T-cell (primary cell): ENCODE measurements at regions of chr19 and their contacts with region 1.

Region 1: GRCh38 chr19:13195678-13196077 is 45.5 kb downstream of the IER2 start:
- DNase-seq: peak in 32 of 35 experiments; percentile 8 to 75 (median 41)
- ATAC-seq: peak; percentile 50 to 71 (median 60)
- H3K4me3 ChIP-seq: no peak overlapping the region
- H3K4me3 Mint-ChIP-seq: peak overlapping the region in 1 of 3 donors; percentile 22
- H3K27ac ChIP-seq: no peak overlapping the region
- H3K27ac Mint-ChIP-seq: peak overlapping the region; percentile 44 to 71
- H3K4me1 ChIP-seq: peaks cover 3 to 45% of the 10 kb centered on the region in 2 experiments
- H3K4me1 Mint-ChIP-seq: peaks cover 18 to 35% (median 20%) of the 10 kb centered on the region in 3 donors
- H3K27me3 ChIP-seq: no peaks in the 10 kb centered on the region
- H3K27me3 Mint-ChIP-seq: no peaks in the 10 kb centered on the region

Region 2: DNA sequence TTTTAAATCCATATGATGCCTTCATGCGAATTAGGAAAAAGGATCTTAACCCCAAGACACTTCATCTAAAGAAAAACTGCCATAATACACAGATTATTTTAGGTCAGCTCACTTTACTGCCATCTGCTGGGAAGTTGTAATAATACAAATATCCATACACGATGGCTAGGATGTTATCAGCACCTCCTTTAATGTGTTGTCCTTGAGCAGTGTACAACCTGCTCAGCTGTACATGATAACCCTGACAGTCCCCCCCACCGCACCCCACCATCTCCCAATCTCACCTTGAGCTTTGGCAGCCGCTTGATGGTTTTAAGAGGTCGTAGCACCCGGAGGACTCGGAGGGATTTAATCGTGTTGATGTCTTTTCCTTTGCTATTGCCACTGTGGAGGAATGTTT is 66.8 kb after region 1 on chr19:
- CTCF ChIA-PET with region 1: interaction called in 1 of 2 experiments, 12 read pairs
- POLR2A ChIA-PET with region 1: interaction called in 1 of 2 experiments, 3 read pairs
- DNase-seq: peak in 2 of 35 experiments; percentile 24 to 74
- ATAC-seq: peak; percentile 52 to 69 (median 56)
- H3K4me3 ChIP-seq: no peak overlapping the region
- H3K4me3 Mint-ChIP-seq: no peak overlapping the region
- H3K27ac ChIP-seq: no peak overlapping the region
- H3K27ac Mint-ChIP-seq: no peak overlapping the region
- H3K4me1 ChIP-seq: no peaks in the 10 kb centered on the region
- H3K4me1 Mint-ChIP-seq: peaks cover 4 to 13% (median 8%) of the 10 kb centered on the region in 3 donors
- H3K27me3 ChIP-seq: peaks cover 0 to 26% of the 10 kb centered on the region in 2 experiments
- H3K27me3 Mint-ChIP-seq: peaks cover 12 to 13% of the 10 kb centered on the region in 2 donors